SK-N-SH (cell line): ENCODE measurements at regions of chr15 and their contacts with region 1.

Region 1: GRCh38 chr15:99704444-99704838 is 28.8 kb downstream of the LYSMD4 start:
- DNase-seq: peak; percentile 65
- H3K4me3 ChIP-seq: no peak overlapping the region; a peak in 1 of 4 replicates
- H3K27ac ChIP-seq: peak overlapping the region in 1 of 2 experiments; percentile 80; a peak in 2 of 4 replicates
- H3K4me1 ChIP-seq: peaks cover 19 to 33% of the 10 kb centered on the region in 2 experiments
- H3K27me3 ChIP-seq: no peaks in the 10 kb centered on the region
- CTCF ChIP-seq: peak; percentile 77
- EP300 ChIP-seq: no peak
- RAD21 ChIP-seq: peak; percentile 91

Region 2: DNA sequence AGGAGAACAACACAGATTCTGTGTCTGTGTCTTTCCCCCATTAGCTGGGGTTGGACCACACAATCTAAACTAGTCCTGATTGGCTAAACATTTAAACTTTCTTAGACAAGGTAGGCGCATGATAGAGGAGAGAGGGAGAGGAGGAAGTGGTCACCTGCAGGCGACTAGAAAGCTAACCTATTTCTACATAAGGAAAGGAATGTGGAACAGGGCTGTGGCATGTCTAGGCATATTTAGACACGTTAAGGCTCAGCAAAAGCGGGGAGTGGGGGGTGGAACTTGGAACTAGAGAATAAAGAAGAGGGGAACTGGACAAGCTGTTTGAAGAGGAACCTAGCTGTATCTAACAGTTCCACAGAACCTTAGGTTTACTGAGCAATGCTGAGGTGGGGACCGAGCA is 440.3 kb before region 1 on chr15:
- CTCF ChIA-PET with region 1: interaction called, 132 read pairs
- POLR2A ChIA-PET with region 1: no interaction called
- DNase-seq: no peak
- H3K4me3 ChIP-seq: no peak overlapping the region
- H3K27ac ChIP-seq: no peak overlapping the region
- H3K4me1 ChIP-seq: no peaks in the 10 kb centered on the region
- H3K27me3 ChIP-seq: no peaks in the 10 kb centered on the region
- CTCF ChIP-seq: no peak
- EP300 ChIP-seq: no peak
- RAD21 ChIP-seq: no peak

Region 3: GRCh38 chr15:99305761-99306505 is 398.5 kb before region 1 on chr15:
- CTCF ChIA-PET with region 1: interaction called, 13 read pairs
- POLR2A ChIA-PET with region 1: no interaction called
- DNase-seq: no peak
- H3K4me3 ChIP-seq: no peak overlapping the region
- H3K27ac ChIP-seq: no peak overlapping the region
- H3K4me1 ChIP-seq: peaks cover 4 to 14% of the 10 kb centered on the region in 2 experiments; a peak in 2 of 4 replicates
- H3K27me3 ChIP-seq: no peaks in the 10 kb centered on the region
- CTCF ChIP-seq: no peak
- EP300 ChIP-seq: no peak
- RAD21 ChIP-seq: no peak

Region 4: DNA sequence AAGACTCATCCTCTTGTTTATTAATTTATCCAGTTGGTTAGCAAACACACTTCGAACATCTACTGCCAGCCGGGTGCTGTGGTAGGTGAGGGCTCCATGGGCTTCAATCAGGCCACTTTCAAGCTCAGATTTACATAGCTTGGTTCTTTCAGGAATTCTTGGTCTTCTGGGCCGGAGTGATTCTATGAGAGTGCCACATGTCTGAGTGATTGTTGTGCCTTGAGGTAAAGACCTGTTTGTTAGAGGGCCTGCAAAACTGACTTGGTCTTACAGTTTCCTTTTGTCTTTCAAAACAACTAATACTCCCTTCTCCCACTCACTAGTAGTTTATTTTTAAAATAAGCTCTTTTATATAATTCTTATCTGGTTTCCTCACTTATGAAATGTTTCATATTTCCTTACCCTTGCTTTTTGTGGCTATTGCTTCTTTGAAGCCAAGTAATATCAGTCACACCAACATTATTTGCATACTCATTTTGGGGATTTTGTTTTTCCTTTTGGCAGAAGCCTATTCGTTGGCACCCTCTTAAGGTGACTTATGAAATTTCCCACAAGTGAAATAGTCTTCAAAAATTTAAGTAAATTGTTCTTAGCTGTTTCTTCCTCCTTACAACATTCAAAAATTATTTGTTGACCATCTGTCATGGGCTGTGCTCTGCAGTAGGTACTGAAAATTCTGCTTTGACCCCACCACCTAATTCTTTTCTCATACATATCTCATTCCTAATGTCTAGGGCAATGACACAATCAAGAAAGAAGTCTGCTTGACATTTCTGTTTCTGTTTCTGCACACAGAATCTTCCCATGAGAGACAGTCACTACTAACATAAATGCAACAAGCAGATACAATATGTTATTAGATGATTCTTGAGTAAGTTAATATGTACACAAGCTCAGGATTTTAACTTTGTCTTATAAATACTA is 333.0 kb before region 1 on chr15:
- CTCF ChIA-PET with region 1: interaction called, 12 read pairs
- POLR2A ChIA-PET with region 1: no interaction called
- DNase-seq: no peak
- H3K4me3 ChIP-seq: no peak overlapping the region
- H3K27ac ChIP-seq: no peak overlapping the region
- H3K4me1 ChIP-seq: no peaks in the 10 kb centered on the region
- H3K27me3 ChIP-seq: no peaks in the 10 kb centered on the region
- CTCF ChIP-seq: no peak
- EP300 ChIP-seq: no peak
- RAD21 ChIP-seq: 0 out of 2 replicates have a peak, but pooled peaks have one; percentile 20

Region 5: DNA sequence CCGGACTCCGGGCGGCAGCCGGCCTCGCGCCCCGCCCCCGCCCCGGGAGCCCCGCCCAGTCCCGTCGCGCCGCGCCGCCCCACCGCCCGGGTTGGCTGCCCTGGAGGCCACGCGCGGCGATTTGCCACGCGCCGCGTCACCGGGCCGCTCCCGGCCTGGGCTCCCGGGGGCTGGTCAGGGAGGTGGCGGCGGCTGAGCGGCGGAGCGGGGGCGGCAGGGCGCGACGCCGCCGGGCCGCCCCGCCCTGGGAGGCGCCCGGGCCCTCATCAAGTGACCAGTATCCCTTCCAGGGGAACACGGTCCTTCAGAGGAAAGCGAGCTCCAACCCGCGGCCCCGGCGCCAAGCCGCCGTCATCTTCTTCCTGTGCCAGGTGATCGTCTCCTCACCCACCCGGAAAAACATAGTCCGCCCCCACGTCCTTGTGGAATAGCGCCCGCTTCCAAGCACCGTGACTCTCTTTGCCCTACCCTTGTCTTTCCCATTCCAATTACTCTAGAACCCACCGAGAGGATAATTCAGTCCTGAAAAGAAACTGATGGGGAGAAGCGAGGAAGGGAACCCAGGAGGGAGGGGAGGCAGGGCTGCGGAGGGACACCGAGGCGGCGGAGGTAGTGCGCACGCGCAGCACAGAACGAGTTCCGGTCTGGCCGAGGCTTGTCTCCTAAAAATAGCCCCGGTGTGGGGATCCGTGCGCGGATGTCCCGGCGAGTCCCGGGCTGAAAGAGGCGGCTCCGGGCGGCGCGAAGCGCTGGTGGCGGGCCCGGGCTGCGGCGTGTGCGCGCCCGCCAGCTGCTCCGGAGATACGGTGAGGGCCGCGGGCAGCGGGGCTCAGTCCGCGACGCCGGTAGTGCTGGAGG is 138.9 kb before region 1 on chr15 and contains the start of gene MEF2A:
- CTCF ChIA-PET with region 1: interaction called, 29 read pairs
- POLR2A ChIA-PET with region 1: no interaction called
- DNase-seq: peak; percentile 97
- H3K4me3 ChIP-seq: peak within 1 kb of the TSS; percentile 87 to 91
- H3K27ac ChIP-seq: peak within 1 kb of the TSS; percentile 88 to 89
- H3K4me1 ChIP-seq: peaks cover 8 to 19% of the 10 kb centered on the region in 2 experiments; a peak in 3 of 4 replicates
- H3K27me3 ChIP-seq: no peaks in the 10 kb centered on the region
- CTCF ChIP-seq: no peak
- EP300 ChIP-seq: peak in 1 of 2 experiments; percentile 51; a peak in 1 of 4 replicates
- RAD21 ChIP-seq: no peak
- polyA plus RNA-seq, gene MEF2A: 20.9 and 27.5 TPM in 2 replicates

Region 6: DNA sequence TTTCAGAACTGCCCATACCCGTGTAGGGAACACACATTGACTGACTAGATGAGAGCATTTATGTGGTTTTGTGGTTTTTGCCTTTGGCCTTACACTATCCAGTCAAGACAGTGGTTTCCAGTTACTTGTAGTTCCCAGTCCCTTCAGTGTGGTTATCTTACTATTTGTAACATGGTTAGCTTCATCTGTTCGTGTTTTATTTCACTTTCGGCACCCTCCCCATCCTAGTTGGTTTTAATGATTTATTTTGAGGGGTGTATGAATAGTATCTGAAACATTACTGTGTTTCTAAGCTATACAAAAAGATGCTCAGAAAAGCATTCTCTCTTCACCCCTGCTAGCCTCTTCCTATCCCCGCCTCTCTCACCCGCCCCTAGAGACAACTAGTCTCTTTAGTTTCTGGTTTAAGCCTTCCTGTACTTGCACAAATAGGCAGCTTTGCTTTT is 14.7 kb after region 1 on chr15:
- CTCF ChIA-PET with region 1: interaction called, 67 read pairs
- POLR2A ChIA-PET with region 1: interaction called, 3 read pairs
- DNase-seq: no peak
- H3K4me3 ChIP-seq: no peak overlapping the region
- H3K27ac ChIP-seq: no peak overlapping the region
- H3K4me1 ChIP-seq: no peaks in the 10 kb centered on the region; a peak in 2 of 4 replicates
- H3K27me3 ChIP-seq: no peaks in the 10 kb centered on the region
- CTCF ChIP-seq: no peak
- EP300 ChIP-seq: no peak
- RAD21 ChIP-seq: no peak

Region 7: DNA sequence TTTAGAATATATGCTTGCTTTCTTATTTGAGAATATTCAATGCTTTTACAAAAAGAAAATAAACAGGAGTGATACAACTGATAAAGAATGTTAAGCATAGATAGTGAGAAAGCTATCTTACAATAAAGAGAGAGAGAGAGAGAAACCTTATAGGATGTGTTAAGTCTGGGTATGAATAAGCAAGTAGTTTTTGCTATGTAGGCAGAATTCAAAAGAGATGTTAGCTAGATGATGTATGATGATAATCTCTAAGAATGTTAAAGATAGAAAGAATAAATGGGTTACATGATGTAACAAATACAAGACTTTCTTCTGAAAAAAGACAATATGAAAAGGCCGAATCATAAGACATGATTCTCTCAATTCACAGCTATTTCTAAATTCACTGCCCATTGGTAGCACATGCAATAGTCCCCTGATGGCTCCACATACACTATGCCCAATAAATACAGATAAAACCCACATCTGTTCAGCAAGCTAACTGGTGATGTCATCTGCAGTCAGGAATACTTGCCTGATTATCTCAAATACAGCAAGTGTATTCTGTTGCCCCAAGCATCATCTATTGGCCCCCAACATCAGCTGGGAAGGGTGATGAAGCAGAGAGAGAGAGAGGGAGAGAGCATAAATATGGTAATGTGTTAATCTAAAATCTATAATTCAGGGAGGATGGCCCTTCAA is 197.9 kb after region 1 on chr15:
- CTCF ChIA-PET with region 1: no interaction called
- POLR2A ChIA-PET with region 1: no interaction called
- DNase-seq: no peak
- H3K4me3 ChIP-seq: no peak overlapping the region
- H3K27ac ChIP-seq: no peak overlapping the region
- H3K4me1 ChIP-seq: no peaks in the 10 kb centered on the region
- H3K27me3 ChIP-seq: no peaks in the 10 kb centered on the region
- CTCF ChIP-seq: no peak
- EP300 ChIP-seq: no peak
- RAD21 ChIP-seq: no peak

Region 8: DNA sequence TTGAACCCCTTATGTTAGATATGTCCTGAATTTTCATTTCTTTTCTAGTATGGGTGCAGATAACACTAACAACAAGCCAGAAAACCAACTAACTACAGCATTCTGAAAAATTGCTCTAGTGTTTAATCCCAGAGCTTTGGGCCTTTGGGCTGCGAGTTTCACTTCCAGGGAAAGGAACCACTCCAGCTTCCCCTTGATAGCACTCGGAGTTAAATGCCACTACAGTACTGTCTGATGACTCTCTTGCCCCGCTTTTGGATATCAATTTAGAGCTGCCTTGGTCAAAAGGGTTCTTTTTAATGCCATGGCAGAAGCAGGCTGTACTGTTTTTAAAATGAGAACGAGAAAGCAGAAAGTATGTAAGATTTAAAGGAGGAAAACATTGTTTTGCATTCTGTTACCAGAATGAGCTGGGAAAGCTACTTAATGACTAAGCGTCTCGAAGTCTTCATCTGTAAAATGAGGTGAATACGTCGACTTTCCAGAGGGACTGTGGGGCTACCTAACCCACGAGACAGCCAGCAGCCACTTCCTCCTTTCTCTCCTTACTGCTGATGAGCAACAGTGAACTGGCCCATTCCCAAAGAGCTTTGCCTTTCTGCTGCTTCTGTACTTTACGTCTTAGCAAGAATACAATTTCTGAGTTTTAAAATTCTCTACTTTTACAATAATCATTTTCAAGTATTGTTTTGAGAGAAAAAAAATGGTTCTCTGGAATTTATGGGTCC is 328.1 kb after region 1 on chr15:
- CTCF ChIA-PET with region 1: no interaction called
- POLR2A ChIA-PET with region 1: no interaction called
- DNase-seq: no peak
- H3K4me3 ChIP-seq: no peak overlapping the region
- H3K27ac ChIP-seq: no peak overlapping the region
- H3K4me1 ChIP-seq: no peaks in the 10 kb centered on the region
- H3K27me3 ChIP-seq: no peaks in the 10 kb centered on the region
- CTCF ChIP-seq: no peak
- EP300 ChIP-seq: no peak
- RAD21 ChIP-seq: no peak